ENCODE measurements at regions of chr9 and their contacts with region 1.

Region 1: DNA sequence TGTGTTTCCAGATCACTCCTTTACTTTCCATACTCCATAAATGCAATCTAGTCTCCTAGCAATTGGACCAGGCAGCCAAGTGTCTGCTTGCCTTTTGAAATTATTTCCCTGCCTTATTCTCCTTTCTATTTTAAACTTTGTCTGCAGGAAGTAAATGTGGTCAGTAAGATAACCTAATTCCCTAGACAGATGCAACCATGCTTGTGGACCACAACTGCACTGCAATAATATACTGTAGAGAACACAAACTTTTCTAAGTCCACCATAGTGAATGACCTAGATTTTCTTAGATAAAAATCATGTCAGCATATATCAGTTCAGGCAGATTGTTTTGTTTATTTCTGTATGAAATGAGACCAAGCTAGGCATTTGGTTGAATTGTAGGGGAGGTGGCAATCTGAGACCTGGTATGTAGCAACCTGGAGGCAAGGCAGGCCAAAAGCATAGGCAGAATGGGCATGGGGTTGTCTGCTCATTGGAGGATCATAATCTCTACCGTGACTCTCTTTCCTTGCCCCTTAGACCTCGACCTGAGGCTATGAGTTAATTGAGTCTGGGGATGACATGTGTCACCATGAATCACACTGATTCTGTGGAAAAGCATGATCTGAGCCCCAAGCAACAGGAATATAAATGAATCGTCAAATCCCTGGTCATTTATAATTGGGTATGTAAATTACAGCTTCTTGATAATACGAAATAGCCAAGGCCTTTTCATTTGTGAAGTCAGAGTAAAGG is 20.7 kb downstream of the ACTL7B start:
- DNase-seq: no peak
- H3K4me3 ChIP-seq: no peak overlapping the region
- H3K27ac ChIP-seq: no peak overlapping the region
- H3K4me1 ChIP-seq: no peaks in the 10 kb centered on the region
- H3K27me3 ChIP-seq: no peaks in the 10 kb centered on the region
- CTCF ChIP-seq: no peak
- EP300 ChIP-seq: no peak
- POLR2A ChIP-seq: no peak

Region 2: DNA sequence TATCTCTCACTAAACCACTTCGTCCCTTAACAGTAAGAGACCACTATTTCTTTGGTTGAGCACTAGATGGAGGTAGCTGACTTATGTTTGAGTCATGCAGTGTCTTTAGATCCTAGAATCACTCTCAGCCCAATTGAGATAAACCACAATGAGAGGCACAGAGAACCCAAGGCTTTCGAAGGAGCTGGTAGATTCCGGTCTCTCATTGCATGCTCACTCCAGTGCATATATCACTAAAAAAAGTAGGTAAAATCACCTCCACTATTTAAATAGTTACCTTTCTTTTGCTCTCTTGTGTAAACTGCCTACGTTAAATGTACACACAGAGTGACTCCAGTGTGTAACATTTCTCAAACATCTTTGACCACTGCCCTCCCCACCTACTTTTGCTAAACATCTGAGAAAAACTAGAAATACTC is 54.5 kb after region 1 on chr9:
- in situ Hi-C with region 1: loop called in 1 of 4 experiments (anchors 10 kb)
- intact Hi-C with region 1: no loop called
- DNase-seq: no peak
- H3K4me3 ChIP-seq: no peak overlapping the region
- H3K27ac ChIP-seq: no peak overlapping the region
- H3K4me1 ChIP-seq: peaks cover 0 to 6% (median 3%) of the 10 kb centered on the region in 4 donors
- H3K27me3 ChIP-seq: no peaks in the 10 kb centered on the region
- CTCF ChIP-seq: no peak
- EP300 ChIP-seq: no peak
- POLR2A ChIP-seq: no peak

Measured in transverse colon (tissue), 4 donors.